Endothelial cell of umbilical vein (primary cell): ENCODE measurements at regions of chr13 and their contacts with region 1.

Region 1: GRCh38 chr13:76667551-76667950 is 218.7 kb downstream of the KCTD12 start:
- DNase-seq: peak; percentile 89
- H3K4me3 ChIP-seq: no peak overlapping the region
- H3K27ac ChIP-seq: no peak overlapping the region
- H3K4me1 ChIP-seq: no peaks in the 10 kb centered on the region
- H3K27me3 ChIP-seq: no peaks in the 10 kb centered on the region
- CTCF ChIP-seq: peak; percentile 21 to 39
- POLR2A ChIP-seq: no peak

Region 2: DNA sequence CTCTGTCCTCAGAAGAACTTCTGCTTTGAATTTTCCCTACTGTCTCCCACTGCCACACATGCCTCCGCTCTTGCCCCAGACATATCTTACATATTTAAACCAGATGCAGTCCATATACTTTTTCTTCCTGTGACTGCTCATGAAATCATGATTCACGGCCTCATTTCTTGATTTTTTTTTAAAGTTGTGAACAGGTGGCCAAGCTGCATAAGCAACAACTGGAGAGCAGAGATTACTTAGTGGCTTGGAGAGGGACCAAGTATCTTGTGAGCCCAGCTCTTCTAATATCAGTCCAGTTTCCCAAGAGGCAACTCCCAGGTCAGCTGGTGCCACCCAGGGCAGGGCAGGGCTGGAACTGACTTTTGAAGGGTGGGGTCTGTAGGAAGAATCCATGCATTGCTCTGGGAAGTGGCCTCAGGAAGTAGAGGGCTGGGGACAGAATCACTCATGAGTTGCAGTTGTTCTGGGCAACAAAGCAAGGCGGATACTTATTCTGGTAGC is 879.0 kb before region 1 on chr13:
- CTCF ChIA-PET with region 1: no interaction called
- POLR2A ChIA-PET with region 1: no interaction called
- dilution Hi-C with region 1: no loop called
- intact Hi-C with region 1: no loop called
- DNase-seq: peak; percentile 85
- H3K4me3 ChIP-seq: no peak overlapping the region
- H3K27ac ChIP-seq: peak overlapping the region; percentile 42
- H3K4me1 ChIP-seq: peaks cover 21% of the 10 kb centered on the region
- H3K27me3 ChIP-seq: no peaks in the 10 kb centered on the region
- CTCF ChIP-seq: no peak
- POLR2A ChIP-seq: no peak

Region 3: GRCh38 chr13:76560791-76561190 is 106.8 kb before region 1 on chr13:
- CTCF ChIA-PET with region 1: no interaction called
- POLR2A ChIA-PET with region 1: no interaction called
- dilution Hi-C with region 1: no loop called
- intact Hi-C with region 1: no loop called
- DNase-seq: no peak
- H3K4me3 ChIP-seq: no peak overlapping the region
- H3K27ac ChIP-seq: no peak overlapping the region
- H3K4me1 ChIP-seq: no peaks in the 10 kb centered on the region
- H3K27me3 ChIP-seq: no peaks in the 10 kb centered on the region
- CTCF ChIP-seq: no peak
- POLR2A ChIP-seq: no peak

Region 4: GRCh38 chr13:76579701-76580100 is 87.8 kb before region 1 on chr13:
- CTCF ChIA-PET with region 1: no interaction called
- POLR2A ChIA-PET with region 1: no interaction called
- dilution Hi-C with region 1: no loop called
- intact Hi-C with region 1: no loop called
- DNase-seq: no peak
- H3K4me3 ChIP-seq: no peak overlapping the region
- H3K27ac ChIP-seq: no peak overlapping the region
- H3K4me1 ChIP-seq: no peaks in the 10 kb centered on the region
- H3K27me3 ChIP-seq: no peaks in the 10 kb centered on the region
- CTCF ChIP-seq: no peak
- POLR2A ChIP-seq: no peak

Region 5: DNA sequence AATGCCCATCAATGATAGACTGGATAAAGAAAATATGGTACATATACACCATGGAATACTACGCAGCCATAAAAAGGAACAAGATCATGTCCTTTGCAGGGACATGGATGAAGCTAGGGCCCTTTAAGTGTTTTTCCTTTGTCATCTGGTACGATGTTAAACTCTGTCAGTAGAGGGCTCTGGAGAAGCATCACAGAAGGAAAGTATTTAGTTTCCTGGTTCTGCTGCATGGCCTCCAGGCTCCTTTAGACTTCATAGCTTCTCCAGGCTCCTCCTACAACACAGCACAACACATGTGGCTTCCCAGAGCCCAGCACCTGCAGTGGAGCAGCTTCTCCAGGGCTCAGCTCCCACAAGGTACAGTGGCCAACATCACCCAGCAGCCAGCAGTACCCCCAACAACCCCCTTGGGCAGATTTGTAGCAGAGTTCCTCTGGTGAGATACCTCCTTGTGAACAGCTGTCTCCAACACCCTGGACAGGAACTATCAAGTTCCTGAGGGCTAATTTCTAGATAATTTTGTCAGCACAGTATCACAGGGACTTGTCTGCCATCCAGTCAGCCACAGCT is 155.2 kb after region 1 on chr13:
- CTCF ChIA-PET with region 1: interaction called, 80 read pairs
- POLR2A ChIA-PET with region 1: no interaction called
- dilution Hi-C with region 1: no loop called
- intact Hi-C with region 1: loop called (anchors 1 kb)
- DNase-seq: peak; percentile 71
- H3K4me3 ChIP-seq: no peak overlapping the region
- H3K27ac ChIP-seq: no peak overlapping the region
- H3K4me1 ChIP-seq: no peaks in the 10 kb centered on the region
- H3K27me3 ChIP-seq: no peaks in the 10 kb centered on the region
- CTCF ChIP-seq: peak in 1 of 2 donors; percentile 8
- POLR2A ChIP-seq: no peak